ENCODE measurements at regions of chr14 and their contacts with region 1.

Region 1: DNA sequence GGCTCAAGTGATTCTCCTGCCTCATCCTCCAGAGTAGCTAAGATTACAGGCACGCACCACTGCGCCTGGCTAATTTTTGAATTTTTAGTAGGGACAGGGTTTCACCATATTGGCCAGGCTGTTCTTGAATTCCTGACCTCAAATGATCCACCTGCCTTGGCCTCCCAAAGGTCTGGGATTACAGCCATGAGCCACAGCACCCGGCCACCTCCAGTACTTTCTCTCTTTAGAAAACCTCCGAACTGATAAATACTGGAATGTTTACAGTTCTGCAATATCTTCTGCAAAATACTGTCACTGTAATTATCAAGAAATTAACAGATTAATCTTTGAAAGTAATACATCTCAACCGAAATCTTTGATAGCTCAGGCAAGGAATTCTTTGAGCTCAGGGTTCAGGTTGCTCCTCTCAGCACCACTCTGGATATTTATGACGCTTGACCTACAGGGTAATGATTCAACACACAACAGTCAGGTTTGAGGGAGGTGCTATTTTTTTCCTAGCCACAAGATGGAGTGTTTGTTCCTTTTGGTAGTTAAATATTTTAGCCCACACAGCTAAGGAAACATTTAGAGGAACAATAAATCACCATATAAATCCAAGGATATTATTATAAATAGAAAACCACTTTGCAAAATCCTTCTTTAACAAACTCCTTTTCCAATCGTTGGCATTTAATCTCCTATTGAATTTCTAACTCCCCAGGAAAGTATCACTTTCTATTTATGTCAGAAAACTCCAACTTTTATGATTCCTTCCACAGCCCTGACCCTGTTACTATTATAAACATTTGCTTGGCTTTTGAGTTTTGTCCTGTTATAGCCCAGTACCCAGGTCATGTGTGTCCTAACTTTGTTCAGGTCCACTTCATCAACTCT is 48.6 kb upstream of the GTF2A1 start:
- DNase-seq: no peak
- H3K4me3 ChIP-seq: no peak overlapping the region
- H3K27ac ChIP-seq: no peak overlapping the region
- H3K4me1 ChIP-seq: peaks cover 0 to 6% (median 5%) of the 10 kb centered on the region in 4 donors
- H3K27me3 ChIP-seq: no peaks in the 10 kb centered on the region
- CTCF ChIP-seq: peak; percentile 54 to 80 (median 76)
- EP300 ChIP-seq: no peak
- POLR2A ChIP-seq: no peak

Region 2: DNA sequence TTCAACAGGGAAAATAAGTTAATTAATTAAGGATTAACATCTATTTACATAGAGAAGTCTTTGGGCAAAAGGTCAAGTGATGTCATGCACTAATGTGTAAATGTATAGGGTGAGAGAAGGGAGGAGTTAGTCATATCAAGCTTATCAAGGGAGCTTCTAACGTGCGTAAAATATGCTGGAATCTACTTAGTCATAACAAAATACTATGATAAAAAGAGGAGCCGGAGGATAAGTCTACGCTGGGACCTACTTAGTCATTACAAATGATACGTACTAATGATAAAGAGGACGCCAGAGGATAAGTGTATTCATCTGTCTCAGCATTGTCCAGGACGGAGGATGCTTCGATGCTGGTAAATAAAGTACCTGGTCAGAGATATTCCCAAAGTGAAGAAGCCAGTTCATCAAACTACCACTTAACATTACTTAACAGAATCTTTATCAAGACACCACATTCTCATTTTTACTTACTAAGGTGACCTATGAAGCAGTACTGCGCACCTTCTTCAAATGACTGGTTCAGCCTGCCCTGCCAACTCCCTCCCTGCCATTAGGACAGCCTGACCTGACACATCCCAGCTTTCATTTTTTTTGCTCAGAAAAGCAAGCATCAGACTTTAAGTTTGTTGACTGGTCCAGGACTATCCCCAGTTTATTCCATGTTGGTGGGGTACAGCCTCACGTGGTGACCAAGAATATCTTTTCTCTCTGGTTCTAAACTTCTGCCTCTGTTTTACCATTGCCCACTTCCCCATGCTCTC is 17.9 kb after region 1 on chr14:
- intact Hi-C with region 1: no loop called
- DNase-seq: no peak
- H3K4me3 ChIP-seq: no peak overlapping the region
- H3K27ac ChIP-seq: no peak overlapping the region
- H3K4me1 ChIP-seq: no peaks in the 10 kb centered on the region
- H3K27me3 ChIP-seq: no peaks in the 10 kb centered on the region
- CTCF ChIP-seq: no peak
- EP300 ChIP-seq: no peak
- POLR2A ChIP-seq: no peak

Region 3: DNA sequence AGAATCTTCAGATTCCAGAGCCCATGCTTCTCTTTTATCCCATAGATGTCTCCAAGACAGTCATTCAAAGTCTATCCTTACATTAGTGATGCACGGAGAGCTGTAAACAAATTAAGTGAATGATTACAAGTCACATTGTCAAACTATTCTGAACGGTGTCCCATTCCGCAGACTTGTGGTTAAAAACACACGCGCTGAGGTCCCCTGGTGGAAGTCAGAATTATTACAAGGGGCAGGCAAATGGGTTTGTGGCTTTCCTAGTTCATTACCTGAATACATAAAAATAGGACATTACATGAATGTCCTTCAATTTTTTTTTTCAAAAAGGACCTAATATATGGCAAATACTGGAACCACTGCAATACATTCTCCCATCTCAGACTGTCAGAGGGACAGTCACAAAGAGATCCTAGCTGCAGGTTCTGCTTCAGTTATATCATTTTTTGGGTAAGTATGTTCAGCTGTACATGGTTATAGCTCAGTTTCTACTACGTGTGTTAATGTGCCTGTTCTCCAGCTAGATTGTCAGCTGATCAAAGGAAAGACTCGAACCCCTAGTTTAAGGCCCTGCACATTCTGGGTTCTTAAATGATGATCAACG is 183.9 kb after region 1 on chr14:
- intact Hi-C with region 1: loop called (anchors 1 kb)
- DNase-seq: peak; percentile 71
- H3K4me3 ChIP-seq: no peak overlapping the region
- H3K27ac ChIP-seq: no peak overlapping the region
- H3K4me1 ChIP-seq: peaks cover 0 to 20% (median 0%) of the 10 kb centered on the region in 4 donors
- H3K27me3 ChIP-seq: peaks cover 0 to 27% (median 0%) of the 10 kb centered on the region in 3 donors
- CTCF ChIP-seq: peak; percentile 57 to 88 (median 84)
- EP300 ChIP-seq: no peak
- POLR2A ChIP-seq: no peak

Region 4: DNA sequence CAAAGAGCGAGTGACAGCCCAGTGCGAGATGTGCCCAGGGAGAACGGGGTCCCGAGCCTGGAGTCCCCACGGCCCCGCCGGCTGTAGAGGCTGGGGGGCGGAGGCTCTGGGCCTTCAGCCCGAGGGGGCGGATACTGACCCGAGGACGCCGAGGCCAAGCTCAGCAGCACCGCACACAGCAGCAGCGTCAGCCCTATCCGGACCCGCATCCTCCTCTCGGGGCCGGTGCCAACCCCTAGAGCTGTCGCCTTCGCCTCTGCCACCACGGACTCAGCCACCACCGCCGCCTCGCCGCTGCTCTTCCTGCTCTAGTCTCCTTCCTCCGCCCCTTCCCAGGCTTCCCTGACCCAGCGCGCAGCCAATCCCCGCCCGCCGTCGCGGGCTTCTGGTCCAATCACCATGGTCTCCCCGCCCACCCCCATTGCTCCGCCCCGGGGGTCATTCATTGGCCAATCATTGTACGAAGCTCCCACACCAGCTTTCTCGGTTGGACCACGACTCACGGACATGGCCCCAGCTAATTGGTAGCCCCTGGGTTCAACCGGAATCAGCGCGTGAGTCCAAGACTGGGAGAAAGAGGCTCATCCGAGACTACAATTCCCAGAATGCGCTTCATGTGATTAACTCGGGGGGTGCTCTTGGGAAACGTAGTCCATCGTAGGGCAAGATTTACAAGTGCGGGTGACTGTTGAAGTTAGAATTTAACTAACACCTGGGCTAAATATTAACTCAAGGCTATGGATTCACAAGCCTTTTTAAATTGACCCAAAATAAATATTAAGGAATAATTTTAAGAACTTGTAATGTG is 264.4 kb after region 1 on chr14 and contains the start of gene SEL1L:
- intact Hi-C with region 1: no loop called
- DNase-seq: peak; percentile 100
- H3K4me3 ChIP-seq: peak within 1 kb of the TSS; percentile 78 to 96 (median 93)
- H3K27ac ChIP-seq: peak within 1 kb of the TSS; percentile 70 to 84 (median 80)
- H3K4me1 ChIP-seq: peaks cover 0 to 49% (median 38%) of the 10 kb centered on the region in 4 donors
- H3K27me3 ChIP-seq: no peaks in the 10 kb centered on the region
- CTCF ChIP-seq: no peak
- EP300 ChIP-seq: no peak
- POLR2A ChIP-seq: peak; percentile 58 to 77
- total RNA-seq, gene SEL1L: 52.0 to 74.8 (median 54.8) TPM

Measured in sigmoid colon (tissue), 7 donors.